Activated naive CD8-positive, alpha-beta T cell treated with anti-CD3 and anti-CD28 coated beads, Interleukin-2, amount 10 ng/mL, durations not matched to agents 7 days and 5 days (primary cell): ENCODE measurements at regions of chr9 and their contacts with region 1.

Region 1: GRCh38 chr9:113349445-113350094 is at the start of gene BSPRY:
- DNase-seq: peak; percentile 80
- ATAC-seq: peak; percentile 65
- H3K4me3 Mint-ChIP-seq: peak within 1 kb of the TSS; percentile 93
- H3K27ac Mint-ChIP-seq: peak within 1 kb of the TSS; percentile 90
- H3K4me1 Mint-ChIP-seq: peaks cover 31% of the 10 kb centered on the region
- H3K27me3 Mint-ChIP-seq: no peaks in the 10 kb centered on the region
- total RNA-seq, gene BSPRY: 9.6 to 10.6 TPM

Region 2: GRCh38 chr9:113255438-113255837 is 94.1 kb before region 1 on chr9:
- POLR2A ChIA-PET with region 1: no interaction called
- DNase-seq: no peak
- ATAC-seq: no peak
- H3K4me3 Mint-ChIP-seq: no peak overlapping the region
- H3K27ac Mint-ChIP-seq: no peak overlapping the region
- H3K4me1 Mint-ChIP-seq: peaks cover 5% of the 10 kb centered on the region
- H3K27me3 Mint-ChIP-seq: no peaks in the 10 kb centered on the region

Region 3: GRCh38 chr9:113275157-113276131 is 74.1 kb before region 1 on chr9 and contains the starts of genes CDC26 and PRPF4:
- POLR2A ChIA-PET with region 1: interaction called, 12 read pairs
- DNase-seq: peak; percentile 94
- ATAC-seq: peak; percentile 94
- H3K4me3 Mint-ChIP-seq: no peak within 1 kb of the TSS
- H3K27ac Mint-ChIP-seq: no peak within 1 kb of the TSS
- H3K4me1 Mint-ChIP-seq: peaks cover 22% of the 10 kb centered on the region
- H3K27me3 Mint-ChIP-seq: no peaks in the 10 kb centered on the region
- total RNA-seq, gene CDC26: 27.5 to 28.9 TPM
- total RNA-seq, gene PRPF4: 31.1 to 31.8 TPM

Region 4: GRCh38 chr9:113376634-113377567 is 27.3 kb after region 1 on chr9 and contains the start of gene HDHD3:
- POLR2A ChIA-PET with region 1: interaction called, 13 read pairs
- DNase-seq: peak; percentile 86
- ATAC-seq: peak; percentile 93
- H3K4me3 Mint-ChIP-seq: peak within 1 kb of the TSS; percentile 91
- H3K27ac Mint-ChIP-seq: peak within 1 kb of the TSS; percentile 85
- H3K4me1 Mint-ChIP-seq: peaks cover 15% of the 10 kb centered on the region
- H3K27me3 Mint-ChIP-seq: peaks cover 3% of the 10 kb centered on the region
- total RNA-seq, gene HDHD3: 20.0 to 21.3 TPM